Caco-2 (cell line): ENCODE measurements at regions of chr11 and their contacts with region 1.

Region 1: DNA sequence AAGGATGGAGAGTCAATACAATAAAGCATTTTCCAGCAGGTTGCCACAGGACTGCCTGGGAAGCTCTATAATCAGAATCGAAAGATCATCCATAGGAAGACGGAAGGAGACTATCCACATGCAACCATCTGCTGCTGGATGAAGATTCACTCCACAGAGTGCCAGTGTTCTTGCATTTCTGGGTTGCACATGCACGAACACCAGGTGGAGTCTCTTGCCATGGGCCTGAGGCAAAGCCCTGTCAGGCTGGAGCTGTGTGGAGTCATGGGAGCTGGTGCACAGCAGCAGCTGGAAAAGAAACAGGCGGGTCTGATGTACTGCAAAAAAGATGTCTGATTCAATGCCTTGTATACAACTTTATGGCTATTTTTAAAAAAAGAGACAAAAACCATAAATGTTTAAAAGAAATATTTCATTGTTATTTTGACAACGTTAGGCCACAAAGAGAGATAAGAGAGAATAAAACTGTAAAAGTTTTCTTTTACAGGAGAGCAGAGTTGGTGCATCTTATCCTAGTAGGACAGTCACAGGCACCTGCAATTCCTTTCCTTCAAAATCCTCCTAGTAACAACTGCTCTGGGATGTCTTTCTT is 12.9 kb upstream of the FAT3 start:
- DNase-seq: peak; percentile 80 to 82
- H3K4me3 ChIP-seq: no peak overlapping the region
- H3K4me3 Mint-ChIP-seq: no peak overlapping the region
- H3K27ac Mint-ChIP-seq: no peak overlapping the region
- H3K4me1 ChIP-seq: peaks cover 11% of the 10 kb centered on the region; the same call in 1 of the 2 replicates
- H3K4me1 Mint-ChIP-seq: peaks cover 17% of the 10 kb centered on the region
- H3K27me3 ChIP-seq: no peaks in the 10 kb centered on the region
- H3K27me3 Mint-ChIP-seq: no peaks in the 10 kb centered on the region
- CTCF ChIP-seq: peak; percentile 85 to 90

Region 2: GRCh38 chr11:91773090-91773489 is 438.6 kb before region 1 on chr11:
- CTCF ChIA-PET with region 1: no interaction called
- POLR2A ChIA-PET with region 1: no interaction called
- intact Hi-C with region 1: loop called (anchors 5 kb)
- DNase-seq: peak; percentile 57 to 65
- H3K4me3 ChIP-seq: no peak overlapping the region
- H3K4me3 Mint-ChIP-seq: no peak overlapping the region
- H3K27ac Mint-ChIP-seq: no peak overlapping the region
- H3K4me1 ChIP-seq: peaks cover 15% of the 10 kb centered on the region
- H3K4me1 Mint-ChIP-seq: peaks cover 25% of the 10 kb centered on the region
- H3K27me3 ChIP-seq: no peaks in the 10 kb centered on the region
- H3K27me3 Mint-ChIP-seq: no peaks in the 10 kb centered on the region
- CTCF ChIP-seq: peak; percentile 10 to 49

Region 3: GRCh38 chr11:92286709-92287108 is 75.0 kb after region 1 on chr11:
- CTCF ChIA-PET with region 1: interaction called, 11 read pairs
- POLR2A ChIA-PET with region 1: no interaction called
- intact Hi-C with region 1: loop called (anchors 1 kb)
- DNase-seq: peak; percentile 51 to 69
- H3K4me3 ChIP-seq: no peak overlapping the region
- H3K4me3 Mint-ChIP-seq: peak overlapping the region; percentile 50
- H3K27ac Mint-ChIP-seq: peak overlapping the region; percentile 80
- H3K4me1 ChIP-seq: peaks cover 61% of the 10 kb centered on the region
- H3K4me1 Mint-ChIP-seq: peaks cover 68% of the 10 kb centered on the region
- H3K27me3 ChIP-seq: no peaks in the 10 kb centered on the region
- H3K27me3 Mint-ChIP-seq: no peaks in the 10 kb centered on the region
- CTCF ChIP-seq: no peak

Region 4: GRCh38 chr11:92340839-92341238 is 129.2 kb after region 1 on chr11:
- CTCF ChIA-PET with region 1: interaction called, 3 read pairs
- POLR2A ChIA-PET with region 1: no interaction called
- intact Hi-C with region 1: loop called (anchors 2 kb)
- DNase-seq: peak; percentile 42 to 58
- H3K4me3 ChIP-seq: no peak overlapping the region
- H3K4me3 Mint-ChIP-seq: no peak overlapping the region
- H3K27ac Mint-ChIP-seq: no peak overlapping the region
- H3K4me1 ChIP-seq: no peaks in the 10 kb centered on the region
- H3K4me1 Mint-ChIP-seq: peaks cover 12% of the 10 kb centered on the region
- H3K27me3 ChIP-seq: no peaks in the 10 kb centered on the region
- H3K27me3 Mint-ChIP-seq: no peaks in the 10 kb centered on the region
- CTCF ChIP-seq: peak; percentile 55 to 59

Region 5: GRCh38 chr11:92552942-92553341 is 341.3 kb after region 1 on chr11:
- CTCF ChIA-PET with region 1: interaction called, 9 read pairs
- POLR2A ChIA-PET with region 1: no interaction called
- intact Hi-C with region 1: loop called (anchors 1 kb)
- DNase-seq: no peak
- H3K4me3 ChIP-seq: no peak overlapping the region
- H3K4me3 Mint-ChIP-seq: no peak overlapping the region
- H3K27ac Mint-ChIP-seq: no peak overlapping the region
- H3K4me1 ChIP-seq: no peaks in the 10 kb centered on the region
- H3K4me1 Mint-ChIP-seq: no peaks in the 10 kb centered on the region
- H3K27me3 ChIP-seq: no peaks in the 10 kb centered on the region
- H3K27me3 Mint-ChIP-seq: peaks cover 7% of the 10 kb centered on the region
- CTCF ChIP-seq: peak; percentile 23 to 60